ENCODE measurements at regions of chr13 and their contacts with region 1.

Region 1: DNA sequence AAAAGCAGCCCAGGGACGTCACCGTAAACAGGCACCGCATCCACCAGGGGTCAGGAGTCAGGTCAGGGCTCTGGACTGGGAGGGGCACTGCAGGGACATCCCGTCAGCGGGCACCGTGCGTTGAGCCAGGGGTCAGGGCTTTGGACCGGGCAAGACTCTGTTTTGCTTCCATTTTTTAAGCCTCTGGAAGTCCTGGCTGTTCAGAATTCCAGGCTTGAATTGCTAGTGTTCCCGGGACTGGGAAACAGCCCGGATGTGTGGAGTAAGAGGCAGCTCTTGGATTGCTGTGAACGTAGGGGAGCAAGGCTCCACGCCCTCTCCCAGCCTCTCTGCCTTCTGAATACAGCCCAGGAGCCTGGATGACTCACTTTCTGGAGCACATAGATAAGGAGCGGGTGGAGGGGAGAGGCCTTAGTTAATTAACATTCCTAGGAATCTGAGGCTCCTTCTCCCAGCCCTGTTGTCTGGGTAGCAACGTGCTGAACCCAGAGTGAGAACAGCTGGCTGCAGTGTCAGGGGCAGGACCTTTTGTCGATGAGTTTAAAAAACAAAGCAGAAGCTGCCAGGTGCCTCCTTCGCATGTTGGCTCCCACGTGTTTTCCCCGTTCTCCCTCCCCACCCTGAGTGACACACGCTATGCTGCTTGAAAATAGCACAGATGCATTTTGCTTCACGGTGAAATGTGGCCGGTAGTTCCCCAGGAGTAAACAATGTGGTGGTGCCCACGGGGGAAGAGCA is 21.9 kb downstream of the ATP11A start:
- DNase-seq: peak; percentile 80 to 85
- ATAC-seq: peak; percentile 97
- H3K4me3 ChIP-seq: peak overlapping the region; percentile 34 to 44 (median 38)
- H3K27ac ChIP-seq: peak overlapping the region; percentile 80 to 89 (median 86)
- H3K4me1 ChIP-seq: peaks cover 17 to 19% of the 10 kb centered on the region in 2 donors
- H3K27me3 ChIP-seq: no peaks in the 10 kb centered on the region
- CTCF ChIP-seq: peak in 2 of 5 experiments; percentile 17 to 29
- POLR2A ChIP-seq: peak in 1 of 2 donors; percentile 32

Region 2: DNA sequence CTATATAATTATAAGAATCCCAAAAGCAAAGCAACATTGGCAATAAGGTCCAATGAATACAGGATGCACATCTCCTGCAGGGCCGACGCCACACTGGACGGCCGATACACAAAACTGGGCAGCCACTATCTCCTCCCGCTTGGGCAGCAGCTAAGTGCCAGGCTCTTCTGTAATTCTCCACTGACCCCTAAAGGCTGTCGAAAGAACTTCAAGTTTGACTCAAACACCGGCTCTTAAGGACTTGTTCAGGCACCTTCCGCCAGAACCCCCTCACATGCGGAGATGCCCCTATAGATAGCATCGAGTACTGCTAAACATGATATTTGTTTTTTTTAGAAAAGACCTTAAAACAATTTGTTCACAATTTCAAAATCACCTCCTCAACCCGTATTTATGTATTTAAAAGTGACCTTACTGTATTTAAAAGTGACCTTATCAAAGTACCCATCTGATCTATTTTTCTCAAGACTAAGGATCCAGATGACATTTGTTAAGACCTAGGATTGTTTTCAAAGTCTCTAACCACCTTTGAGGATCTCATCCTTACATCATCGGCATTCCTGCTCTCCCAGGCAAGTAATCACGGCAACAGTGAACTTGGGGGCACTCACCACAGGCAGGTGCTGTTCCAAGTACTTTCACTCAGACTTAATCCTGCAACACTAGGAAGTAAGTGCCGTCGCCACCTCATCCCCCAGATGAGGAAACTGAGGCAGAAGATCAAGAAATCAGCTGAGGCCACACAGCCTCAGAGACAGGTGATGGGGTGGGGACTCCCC is 201.5 kb before region 1 on chr13:
- in situ Hi-C with region 1: no loop called
- intact Hi-C with region 1: no loop called
- DNase-seq: no peak
- ATAC-seq: peak in 1 of 2 donors; percentile 24
- H3K4me3 ChIP-seq: no peak overlapping the region
- H3K27ac ChIP-seq: no peak overlapping the region
- H3K4me1 ChIP-seq: no peaks in the 10 kb centered on the region
- H3K27me3 ChIP-seq: no peaks in the 10 kb centered on the region
- CTCF ChIP-seq: peak in 2 of 5 experiments; percentile 5 to 29
- POLR2A ChIP-seq: no peak

Region 3: GRCh38 chr13:112725346-112726015 is 13.8 kb after region 1 on chr13:
- in situ Hi-C with region 1: no loop called
- intact Hi-C with region 1: loop called (anchors 1 kb)
- DNase-seq: peak; percentile 85 to 87
- ATAC-seq: peak; percentile 77 to 87
- H3K4me3 ChIP-seq: no peak overlapping the region
- H3K27ac ChIP-seq: peak overlapping the region; percentile 76 to 89 (median 82)
- H3K4me1 ChIP-seq: peaks cover 48 to 49% of the 10 kb centered on the region in 2 donors
- H3K27me3 ChIP-seq: no peaks in the 10 kb centered on the region
- CTCF ChIP-seq: no peak
- POLR2A ChIP-seq: peak; percentile 41 to 48

Region 4: GRCh38 chr13:112740502-112741131 is 28.9 kb after region 1 on chr13:
- in situ Hi-C with region 1: no loop called
- intact Hi-C with region 1: loop called (anchors 2 kb)
- DNase-seq: peak; percentile 89 to 90
- ATAC-seq: peak; percentile 94 to 96
- H3K4me3 ChIP-seq: peak overlapping the region in 1 of 4 donors; percentile 27
- H3K27ac ChIP-seq: peak overlapping the region; percentile 79 to 90 (median 80)
- H3K4me1 ChIP-seq: peaks cover 18 to 34% of the 10 kb centered on the region in 2 donors
- H3K27me3 ChIP-seq: no peaks in the 10 kb centered on the region
- CTCF ChIP-seq: no peak
- POLR2A ChIP-seq: peak; percentile 32 to 43